Activated CD4-positive, alpha-beta memory T cell treated with anti-CD3 and anti-CD28 coated beads for 36 hours (primary cell): ENCODE measurements at regions of chr5 and their contacts with region 1.

Region 1: GRCh38 chr5:36934740-36935356 is 58.3 kb downstream of the NIPBL start:
- DNase-seq: peak; percentile 15
- H3K4me3 Mint-ChIP-seq: no peak overlapping the region
- H3K27ac Mint-ChIP-seq: no peak overlapping the region
- H3K4me1 Mint-ChIP-seq: peaks cover 53% of the 10 kb centered on the region
- H3K27me3 Mint-ChIP-seq: no peaks in the 10 kb centered on the region

Region 2: DNA sequence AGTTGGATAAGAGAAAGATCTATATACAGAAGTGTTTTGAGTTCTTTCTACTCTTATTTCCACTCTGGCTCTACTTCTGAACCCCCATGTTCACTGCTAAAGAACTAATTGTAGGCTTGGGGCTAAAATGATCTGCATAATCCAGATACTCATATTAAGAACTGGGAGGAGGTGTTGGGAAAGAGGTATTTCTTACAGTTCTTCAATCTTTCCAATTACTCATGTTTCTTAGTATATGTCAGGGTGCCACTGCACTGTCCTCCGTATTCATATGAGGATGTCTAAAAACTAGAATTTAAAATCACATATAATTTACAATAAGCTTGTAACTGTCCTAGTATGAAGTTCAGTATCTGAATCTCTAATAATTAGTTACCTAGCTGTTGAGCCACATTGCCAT is 45.6 kb before region 1 on chr5:
- CTCF ChIA-PET with region 1: no interaction called
- POLR2A ChIA-PET with region 1: no interaction called
- intact Hi-C with region 1: loop called (anchors 2 kb)
- DNase-seq: no peak
- H3K4me3 Mint-ChIP-seq: no peak overlapping the region
- H3K27ac Mint-ChIP-seq: peak overlapping the region; percentile 59
- H3K4me1 Mint-ChIP-seq: peaks cover 65% of the 10 kb centered on the region
- H3K27me3 Mint-ChIP-seq: no peaks in the 10 kb centered on the region